Ovary (tissue), 10 donors: ENCODE measurements at regions of chr10 and their contacts with region 1.

Region 1: GRCh38 chr10:116787893-116788665 is 45.7 kb upstream of the HSPA12A start:
- DNase-seq: peak; percentile 81 to 93 (median 90)
- H3K4me3 ChIP-seq: no peak overlapping the region
- H3K27ac ChIP-seq: no peak overlapping the region
- H3K4me1 ChIP-seq: no peaks in the 10 kb centered on the region
- H3K27me3 ChIP-seq: no peaks in the 10 kb centered on the region
- CTCF ChIP-seq: peak; percentile 94 to 96 (median 96)
- EP300 ChIP-seq: no peak
- POLR2A ChIP-seq: no peak

Region 2: DNA sequence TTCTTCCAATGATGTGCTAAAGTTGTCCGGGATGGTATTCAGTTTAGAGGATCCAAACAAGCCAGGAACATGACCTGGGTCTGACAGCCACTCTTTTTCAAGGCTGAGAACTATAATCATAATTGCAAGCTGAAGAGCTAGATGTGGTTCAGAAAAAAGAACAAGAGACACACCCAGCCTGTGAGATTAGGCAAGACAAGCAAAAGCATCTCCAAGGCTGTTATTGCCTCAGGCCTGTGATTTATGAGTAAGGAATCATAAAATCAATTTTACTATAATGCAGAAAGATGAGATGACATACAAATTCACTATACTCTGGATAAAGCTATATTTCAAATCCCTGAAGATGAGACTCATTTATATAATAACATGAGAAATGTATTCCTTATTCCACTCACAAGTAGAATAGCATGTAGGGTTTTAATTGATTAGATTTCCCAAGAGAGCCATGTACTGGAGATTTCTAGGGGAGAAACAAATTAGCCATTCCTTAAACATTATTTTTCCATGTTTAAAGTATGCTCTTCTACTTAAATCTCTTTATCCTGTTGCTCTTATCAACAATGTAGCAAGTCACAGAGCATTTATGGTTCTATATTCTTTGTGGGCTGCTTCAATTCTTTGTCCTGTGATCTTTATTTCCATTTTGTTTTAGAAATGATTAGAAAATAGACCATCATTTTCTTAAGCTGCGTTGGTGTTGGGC is 1919.1 kb before region 1 on chr10:
- intact Hi-C with region 1: no loop called
- DNase-seq: no peak
- H3K4me3 ChIP-seq: no peak overlapping the region
- H3K27ac ChIP-seq: no peak overlapping the region
- H3K4me1 ChIP-seq: no peaks in the 10 kb centered on the region
- H3K27me3 ChIP-seq: no peaks in the 10 kb centered on the region
- CTCF ChIP-seq: no peak
- EP300 ChIP-seq: no peak
- POLR2A ChIP-seq: no peak

Region 3: GRCh38 chr10:116627386-116627933 is 160.6 kb before region 1 on chr10:
- intact Hi-C with region 1: loop called in 3 of 4 experiments (anchors 5 to 10 kb)
- DNase-seq: peak; percentile 38 to 67 (median 62)
- H3K4me3 ChIP-seq: peak overlapping the region; percentile 22
- H3K27ac ChIP-seq: no peak overlapping the region
- H3K4me1 ChIP-seq: peaks cover 11% of the 10 kb centered on the region
- H3K27me3 ChIP-seq: no peaks in the 10 kb centered on the region
- CTCF ChIP-seq: peak; percentile 56 to 71 (median 64)
- EP300 ChIP-seq: no peak
- POLR2A ChIP-seq: no peak

Region 4: DNA sequence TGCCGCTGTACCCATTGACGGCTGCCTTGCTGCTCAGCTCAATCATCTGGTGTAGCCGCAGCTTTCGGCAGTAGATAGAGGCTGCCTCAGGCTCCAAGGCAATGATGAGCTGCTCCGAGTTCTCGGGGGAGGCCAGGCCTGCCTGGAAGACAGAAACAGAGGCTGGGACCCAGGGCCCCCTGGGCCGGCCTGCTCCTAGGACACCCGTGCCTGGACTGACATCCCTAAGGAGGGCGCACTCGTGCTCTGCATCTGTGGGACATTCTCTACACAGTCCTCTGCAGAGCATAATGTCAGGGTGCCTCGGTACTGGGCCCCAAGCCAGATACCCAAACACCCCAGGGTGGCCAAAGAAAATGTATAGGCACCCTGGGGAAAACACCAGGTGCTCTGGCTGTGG is 104.3 kb before region 1 on chr10:
- intact Hi-C with region 1: loop called (anchors 2 to 5 kb)
- DNase-seq: peak in 1 of 5 donors; percentile 18
- H3K4me3 ChIP-seq: no peak overlapping the region
- H3K27ac ChIP-seq: no peak overlapping the region
- H3K4me1 ChIP-seq: peaks cover 10% of the 10 kb centered on the region
- H3K27me3 ChIP-seq: no peaks in the 10 kb centered on the region
- CTCF ChIP-seq: no peak
- EP300 ChIP-seq: no peak
- POLR2A ChIP-seq: no peak

Region 5: GRCh38 chr10:116690356-116691322 is 97.4 kb before region 1 on chr10:
- intact Hi-C with region 1: loop called in 1 of 4 experiments (anchors 5 kb)
- DNase-seq: peak; percentile 67 to 76 (median 73)
- H3K4me3 ChIP-seq: no peak overlapping the region
- H3K27ac ChIP-seq: peak overlapping the region in 1 of 2 donors; percentile 69
- H3K4me1 ChIP-seq: peaks cover 44% of the 10 kb centered on the region
- H3K27me3 ChIP-seq: no peaks in the 10 kb centered on the region
- CTCF ChIP-seq: peak; percentile 36 to 59 (median 40)
- EP300 ChIP-seq: no peak
- POLR2A ChIP-seq: no peak

Region 6: DNA sequence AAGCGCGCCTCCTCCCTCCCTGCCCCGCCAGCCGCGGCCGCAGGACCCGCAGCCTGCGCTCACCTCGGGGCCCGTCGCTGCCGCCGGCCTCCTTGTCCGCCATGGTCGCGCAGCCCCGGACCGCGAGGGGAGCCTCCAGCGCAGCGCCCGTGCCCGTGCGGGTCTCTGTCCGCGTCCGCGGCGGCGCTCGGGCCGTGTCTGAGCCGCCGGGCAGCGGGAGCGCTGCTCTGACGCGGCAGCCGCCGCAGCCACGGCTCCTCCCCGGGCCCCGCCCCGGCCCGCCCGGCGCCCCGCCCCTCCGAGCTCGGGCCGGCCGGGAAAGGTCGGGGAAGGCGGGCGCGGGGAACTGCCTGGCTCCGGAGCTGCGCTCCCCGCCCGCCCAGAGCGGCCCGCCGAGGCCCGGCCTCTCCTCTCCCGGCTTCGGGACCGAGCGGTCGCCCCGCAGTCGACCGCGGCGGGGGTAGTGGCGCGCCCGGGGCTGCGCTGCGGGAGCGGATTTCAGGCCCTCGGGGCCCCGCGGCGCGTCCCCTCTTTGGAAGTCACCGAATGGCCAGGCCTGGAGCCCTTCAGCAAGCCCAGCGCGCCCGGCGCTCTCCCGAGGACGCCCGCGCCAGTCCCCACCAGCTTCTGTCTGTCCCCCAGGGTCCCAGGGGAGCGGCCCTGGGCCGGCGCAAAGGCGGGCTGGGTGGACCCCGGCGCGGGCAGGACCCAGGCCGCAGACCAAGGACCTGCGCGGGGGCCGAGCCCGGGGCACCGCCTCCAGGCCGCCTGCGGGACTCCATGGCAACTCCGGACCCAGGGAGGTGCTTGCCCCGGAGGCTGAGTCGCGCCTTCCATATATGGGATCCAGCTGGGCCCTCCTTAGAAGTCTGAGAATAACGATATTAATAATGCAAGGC is 45.5 kb before region 1 on chr10 and contains the start of gene HSPA12A:
- intact Hi-C with region 1: loop called in 1 of 4 experiments (anchors 1 kb)
- DNase-seq: peak; percentile 80 to 90 (median 85)
- H3K4me3 ChIP-seq: peak within 1 kb of the TSS; percentile 92
- H3K27ac ChIP-seq: peak within 1 kb of the TSS; percentile 79 to 83
- H3K4me1 ChIP-seq: peaks cover 14% of the 10 kb centered on the region
- H3K27me3 ChIP-seq: no peaks in the 10 kb centered on the region
- CTCF ChIP-seq: no peak
- EP300 ChIP-seq: no peak
- POLR2A ChIP-seq: peak; percentile 94
- total RNA-seq, gene HSPA12A: 27.7 to 47.5 (median 40.5) TPM

Region 7: GRCh38 chr10:117762819-117763172 is 974.7 kb after region 1 on chr10:
- intact Hi-C with region 1: no loop called
- DNase-seq: no peak
- H3K4me3 ChIP-seq: no peak overlapping the region
- H3K27ac ChIP-seq: no peak overlapping the region
- H3K4me1 ChIP-seq: no peaks in the 10 kb centered on the region
- H3K27me3 ChIP-seq: no peaks in the 10 kb centered on the region
- CTCF ChIP-seq: no peak
- EP300 ChIP-seq: no peak
- POLR2A ChIP-seq: no peak